T47D (cell line): ENCODE measurements at regions of chr7 and their contacts with region 1.

Region 1: DNA sequence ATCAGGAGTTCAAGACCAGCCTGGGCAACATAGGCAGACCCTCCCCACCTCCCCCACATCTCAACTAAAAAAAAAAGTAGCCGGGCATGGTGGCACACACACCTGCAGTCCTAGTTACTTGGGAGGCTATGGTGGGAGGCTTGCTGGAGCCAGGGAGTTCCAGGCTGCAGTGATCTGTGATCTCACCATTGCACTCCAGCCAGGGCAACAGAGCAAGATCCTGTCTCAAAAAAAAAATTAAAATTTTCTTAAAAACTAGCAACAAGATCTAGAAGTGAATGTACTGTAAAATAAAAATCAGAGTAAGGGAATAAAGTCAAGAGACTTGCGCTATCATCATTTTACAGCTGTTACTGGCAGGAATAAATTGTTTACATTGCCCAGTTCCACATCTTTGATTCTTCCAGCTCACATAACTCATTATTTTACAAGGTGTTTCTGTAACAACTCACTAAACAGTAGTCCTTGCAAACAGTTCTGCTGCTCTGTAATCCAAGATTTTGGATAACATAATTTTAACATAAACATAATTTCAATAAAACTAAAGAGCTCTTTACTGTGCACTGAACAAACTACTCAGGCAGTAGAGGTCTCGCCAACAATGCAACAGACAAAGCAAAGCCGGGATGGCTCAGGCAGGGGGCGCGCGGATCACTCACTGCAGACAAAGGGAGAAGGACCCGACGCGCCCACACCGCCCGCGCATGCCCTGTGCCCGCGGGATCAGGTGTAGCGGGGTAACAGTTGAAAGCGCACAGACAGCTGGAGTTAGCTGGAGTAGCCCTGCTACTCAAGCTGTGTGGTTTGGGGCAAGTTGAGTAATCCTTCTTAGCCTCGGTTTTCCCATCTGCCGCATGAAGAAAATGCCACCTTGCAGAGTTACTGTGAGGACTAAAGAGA is 73.3 kb upstream of the NFE2L3 start:
- DNase-seq: peak; percentile 55 to 80

Region 2: GRCh38 chr7:26250239-26250638 is 171.6 kb after region 1 on chr7:
- in situ Hi-C with region 1: no loop called
- DNase-seq: no peak

Region 3: GRCh38 chr7:26291699-26292538 is 213.2 kb after region 1 on chr7 and contains the start of gene SNX10:
- in situ Hi-C with region 1: loop called (anchors 10 kb)
- DNase-seq: peak; percentile 68 to 82

Region 4: GRCh38 chr7:26556071-26556881 is 477.6 kb after region 1 on chr7:
- in situ Hi-C with region 1: no loop called
- DNase-seq: no peak